ENCODE measurements at regions of chr2 and their contacts with region 1.

Region 1: DNA sequence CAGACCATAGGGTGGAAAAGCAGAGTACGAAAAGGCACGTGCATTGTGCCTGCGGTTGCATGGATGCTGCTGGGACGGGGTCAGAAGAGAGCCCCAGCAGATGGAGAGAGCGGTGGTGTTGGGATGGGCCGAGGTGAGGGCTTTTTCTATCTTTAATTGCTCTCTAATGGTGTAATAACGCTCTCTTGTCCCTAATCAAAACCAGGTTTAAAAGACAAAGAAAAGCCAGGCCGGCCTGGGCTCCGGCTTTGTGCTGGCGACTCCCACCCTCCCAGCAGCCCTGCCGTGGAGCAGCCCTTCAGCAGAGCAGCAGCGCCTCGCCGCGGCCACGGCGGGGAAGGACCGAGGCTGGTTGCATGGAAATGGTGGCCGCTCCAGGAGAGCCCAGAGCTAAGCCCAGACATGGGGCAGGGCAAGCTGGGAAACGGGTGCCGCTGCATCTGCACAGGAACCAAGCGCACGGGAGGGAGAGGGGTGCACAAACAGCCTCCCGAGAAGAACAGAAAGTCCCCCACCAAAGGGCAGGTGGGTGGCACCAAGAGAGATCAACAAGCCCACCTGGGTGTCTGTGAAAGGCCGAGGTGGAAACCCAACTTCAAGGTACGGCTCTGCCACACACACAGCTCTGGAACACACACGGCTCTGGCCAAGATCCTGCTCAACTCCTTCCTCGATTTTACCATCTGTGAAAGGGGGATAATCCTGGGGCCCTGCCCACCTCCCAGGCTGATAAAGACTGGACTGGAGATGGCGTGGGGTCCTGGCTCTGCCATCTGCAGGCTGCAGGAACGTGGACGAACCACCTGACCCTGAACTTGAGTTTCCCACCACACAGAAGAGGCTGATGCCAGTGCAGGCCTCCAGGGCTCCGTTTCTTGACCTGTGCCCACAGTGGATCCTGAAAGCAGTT is 15.0 kb downstream of the HS1BP3 start:
- DNase-seq: peak; percentile 98
- H3K4me3 ChIP-seq: peak overlapping the region in 1 of 2 experiments; percentile 27; a peak in 1 of 4 replicates
- H3K27ac ChIP-seq: peak overlapping the region; percentile 9 to 72; a peak in 3 of 4 replicates
- H3K4me1 ChIP-seq: peaks cover 16 to 21% of the 10 kb centered on the region in 2 experiments
- H3K27me3 ChIP-seq: no peaks in the 10 kb centered on the region
- CTCF ChIP-seq: peak; percentile 98
- EP300 ChIP-seq: peak in 1 of 2 experiments; percentile 37; a peak in 2 of 4 replicates
- RAD21 ChIP-seq: peak; percentile 100

Region 2: GRCh38 chr2:20424300-20425290 is 211.3 kb before region 1 on chr2:
- CTCF ChIA-PET with region 1: interaction called, 133 read pairs
- POLR2A ChIA-PET with region 1: no interaction called
- DNase-seq: peak; percentile 57
- H3K4me3 ChIP-seq: 0 out of 4 replicates have a peak overlapping the region, but pooled peaks of 1 of the 2 experiments have one; percentile 3
- H3K27ac ChIP-seq: peak overlapping the region; percentile 3 to 57; a peak in 3 of 4 replicates
- H3K4me1 ChIP-seq: peaks cover 25 to 32% of the 10 kb centered on the region in 2 experiments
- H3K27me3 ChIP-seq: no peaks in the 10 kb centered on the region
- CTCF ChIP-seq: no peak
- EP300 ChIP-seq: peak; percentile 35 to 78; a peak in 3 of 4 replicates
- RAD21 ChIP-seq: no peak

Region 3: GRCh38 chr2:20456636-20457426 is 179.1 kb before region 1 on chr2:
- CTCF ChIA-PET with region 1: interaction called, 188 read pairs
- POLR2A ChIA-PET with region 1: no interaction called
- DNase-seq: no peak
- H3K4me3 ChIP-seq: no peak overlapping the region
- H3K27ac ChIP-seq: no peak overlapping the region
- H3K4me1 ChIP-seq: peaks cover 0 to 4% of the 10 kb centered on the region in 2 experiments; a peak in 1 of 4 replicates
- H3K27me3 ChIP-seq: no peaks in the 10 kb centered on the region
- CTCF ChIP-seq: no peak
- EP300 ChIP-seq: no peak
- RAD21 ChIP-seq: no peak

Region 4: GRCh38 chr2:20595431-20596192 is 40.3 kb before region 1 on chr2:
- CTCF ChIA-PET with region 1: interaction called, 107 read pairs
- POLR2A ChIA-PET with region 1: interaction called, 5 read pairs
- DNase-seq: no peak
- H3K4me3 ChIP-seq: no peak overlapping the region
- H3K27ac ChIP-seq: no peak overlapping the region; a peak in 1 of 4 replicates
- H3K4me1 ChIP-seq: peaks cover 18 to 28% of the 10 kb centered on the region in 2 experiments; a peak in 3 of 4 replicates
- H3K27me3 ChIP-seq: no peaks in the 10 kb centered on the region
- CTCF ChIP-seq: no peak
- EP300 ChIP-seq: no peak
- RAD21 ChIP-seq: no peak

Region 5: DNA sequence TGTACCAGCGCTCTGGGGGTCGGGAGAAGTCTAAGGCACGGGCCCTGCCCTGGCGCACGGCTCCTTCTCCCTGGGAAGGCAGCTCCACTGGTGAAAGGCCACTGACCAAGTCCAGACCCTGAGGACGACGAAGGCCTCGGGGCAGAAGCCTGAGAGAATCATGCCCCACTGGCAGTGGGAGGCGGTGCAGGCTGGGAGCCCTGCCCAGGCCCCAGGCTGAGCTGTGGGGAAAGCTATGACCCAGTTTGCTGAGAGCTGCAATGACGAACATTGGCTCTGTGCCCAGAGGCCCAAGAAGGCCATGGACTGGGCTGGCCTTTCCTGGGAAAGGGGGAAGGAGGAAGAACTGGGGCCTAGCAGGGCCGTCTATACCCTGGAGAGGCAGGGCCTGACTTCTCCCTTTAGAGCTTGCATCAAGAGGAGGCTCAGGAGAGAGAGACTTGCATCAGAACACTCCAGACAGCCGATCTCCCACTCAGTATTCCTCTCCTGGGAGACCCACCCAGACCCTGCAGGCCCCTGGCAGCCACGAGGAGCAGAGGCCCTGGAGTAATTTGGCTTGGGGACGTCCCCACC is 17.9 kb before region 1 on chr2:
- CTCF ChIA-PET with region 1: interaction called, 33 read pairs
- POLR2A ChIA-PET with region 1: no interaction called
- DNase-seq: peak; percentile 82
- H3K4me3 ChIP-seq: no peak overlapping the region
- H3K27ac ChIP-seq: peak overlapping the region; percentile 67 to 90
- H3K4me1 ChIP-seq: peaks cover 18 to 42% of the 10 kb centered on the region in 2 experiments; a peak in 3 of 4 replicates
- H3K27me3 ChIP-seq: no peaks in the 10 kb centered on the region
- CTCF ChIP-seq: peak; percentile 56
- EP300 ChIP-seq: no peak; a peak in 1 of 4 replicates
- RAD21 ChIP-seq: peak; percentile 23; the same call in 1 of the 2 replicates

Measured in SK-N-SH (cell line).